ENCODE measurements at regions of chr6 and their contacts with region 1.

Region 1: DNA sequence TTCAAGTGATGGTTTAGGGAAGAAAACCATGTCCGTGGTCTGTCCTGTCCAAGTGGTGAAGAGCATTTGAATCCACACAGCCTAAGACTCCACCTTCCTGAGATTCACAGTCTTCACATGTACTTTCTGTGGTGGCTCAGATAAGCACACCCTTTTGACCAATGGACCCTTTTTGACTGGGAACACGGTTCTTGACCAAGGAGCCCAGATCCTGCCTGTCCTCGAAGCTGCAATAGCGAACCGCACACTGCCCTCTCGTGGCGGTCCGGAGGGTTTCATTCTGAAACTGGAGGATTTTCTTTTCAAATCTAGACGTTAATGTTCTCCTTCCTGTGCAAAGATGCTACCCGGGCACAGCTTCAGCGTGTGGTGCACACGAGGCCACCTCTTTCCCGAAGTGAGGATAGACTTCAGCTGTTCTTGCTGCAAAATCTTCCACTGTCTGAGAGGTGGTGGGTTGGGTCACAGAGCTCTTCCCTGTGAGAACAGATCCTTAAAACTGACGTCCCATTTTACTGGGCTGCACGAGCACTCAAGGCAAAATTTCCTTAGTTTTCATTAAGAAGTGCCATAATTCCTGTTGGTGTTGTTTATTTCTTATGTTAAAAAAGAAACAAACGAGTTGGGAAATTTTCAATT is 90.5 kb downstream of the SYNJ2 start:
- DNase-seq: peak; percentile 23 to 85
- H3K4me3 ChIP-seq: no peak overlapping the region
- H3K27ac ChIP-seq: no peak overlapping the region
- H3K4me1 ChIP-seq: peaks cover 0 to 1% (median 0%) of the 10 kb centered on the region in 4 experiments; a peak in 2 of 7 replicates
- H3K27me3 ChIP-seq: no peaks in the 10 kb centered on the region
- CTCF ChIP-seq: peak; percentile 81 to 90 (median 86)
- EP300 ChIP-seq: no peak
- POLR2A ChIP-seq: no peak
- RAD21 ChIP-seq: peak; percentile 94 to 97

Region 2: GRCh38 chr6:157946865-157947532 is 125.2 kb before region 1 on chr6:
- CTCF ChIA-PET with region 1: interaction called, 13 read pairs
- POLR2A ChIA-PET with region 1: no interaction called
- DNase-seq: no peak
- H3K4me3 ChIP-seq: no peak overlapping the region
- H3K27ac ChIP-seq: no peak overlapping the region
- H3K4me1 ChIP-seq: no peaks in the 10 kb centered on the region
- H3K27me3 ChIP-seq: no peaks in the 10 kb centered on the region
- CTCF ChIP-seq: peak in 2 of 3 experiments; percentile 65 to 82; a peak in 3 of 4 replicates
- EP300 ChIP-seq: no peak
- POLR2A ChIP-seq: peak in 1 of 2 experiments; percentile 20; a peak in 1 of 3 replicates
- RAD21 ChIP-seq: peak; percentile 91 to 93

Region 3: DNA sequence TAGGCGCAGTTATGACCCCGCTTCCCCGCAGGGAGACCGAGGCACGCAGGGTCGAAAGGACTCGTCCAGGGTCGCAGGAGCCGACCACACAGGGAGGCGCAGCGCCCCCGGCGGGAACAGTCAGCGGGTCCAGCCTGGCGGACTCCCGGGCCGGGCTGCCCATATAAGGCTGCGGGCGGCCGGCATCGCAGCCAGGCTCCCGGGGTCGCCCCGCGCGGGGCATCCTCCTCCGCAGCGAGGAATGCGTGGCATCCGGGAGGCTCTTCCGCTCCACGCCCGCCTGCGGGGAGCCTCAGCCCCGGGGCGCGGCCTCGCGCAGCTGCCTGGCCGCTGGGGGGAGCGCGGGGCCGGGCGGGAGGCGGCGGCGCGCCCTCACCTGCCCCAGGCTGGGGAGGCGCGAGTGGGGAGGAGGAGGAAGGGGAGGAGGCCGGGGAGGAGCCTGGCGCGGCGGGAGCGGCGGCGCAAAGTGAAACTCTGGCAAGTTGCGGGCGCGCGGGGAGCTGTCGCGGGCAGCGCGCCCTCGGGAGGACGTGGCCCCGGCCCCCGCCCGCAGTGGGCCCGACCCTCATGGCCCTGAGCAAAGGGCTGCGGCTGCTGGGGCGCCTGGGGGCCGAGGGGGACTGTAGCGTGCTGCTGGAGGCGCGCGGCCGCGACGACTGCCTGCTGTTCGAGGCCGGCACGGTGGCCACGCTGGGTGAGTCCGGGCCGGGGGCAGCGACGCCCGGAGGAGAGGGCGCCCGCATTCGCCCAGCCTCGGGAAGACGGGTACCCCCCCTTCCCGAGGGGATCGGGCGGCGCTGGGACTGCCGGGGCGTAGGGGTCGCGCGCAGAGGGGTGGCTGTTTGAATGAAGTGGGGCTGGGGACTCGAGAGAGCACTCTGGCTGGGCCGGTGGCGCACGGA is 90.6 kb before region 1 on chr6 and contains the start of gene SYNJ2:
- CTCF ChIA-PET with region 1: interaction called, 12 read pairs
- POLR2A ChIA-PET with region 1: interaction called, 5 read pairs
- DNase-seq: peak; percentile 57 to 82
- H3K4me3 ChIP-seq: peak within 1 kb of the TSS; percentile 50 to 81 (median 62)
- H3K27ac ChIP-seq: peak within 1 kb of the TSS; percentile 75; the same call in 1 of the 2 replicates
- H3K4me1 ChIP-seq: peaks cover 4 to 24% (median 20%) of the 10 kb centered on the region in 4 experiments
- H3K27me3 ChIP-seq: peaks cover 0 to 16% (median 11%) of the 10 kb centered on the region in 4 experiments; a peak in 5 of 7 replicates
- CTCF ChIP-seq: peak in 2 of 3 experiments; percentile 40 to 44; a peak in 3 of 4 replicates
- EP300 ChIP-seq: no peak
- POLR2A ChIP-seq: peak in 1 of 2 experiments; percentile 48; a peak in 1 of 3 replicates
- RAD21 ChIP-seq: peak; percentile 13 to 21; a peak in 2 of 4 replicates
- total RNA-seq, gene SYNJ2: 13.5 and 13.9 TPM in 2 replicates

Region 4: GRCh38 chr6:158026054-158026900 is 45.9 kb before region 1 on chr6:
- CTCF ChIA-PET with region 1: interaction called, 23 read pairs
- POLR2A ChIA-PET with region 1: no interaction called
- DNase-seq: peak in 1 of 2 experiments; percentile 80
- H3K4me3 ChIP-seq: no peak overlapping the region
- H3K27ac ChIP-seq: no peak overlapping the region
- H3K4me1 ChIP-seq: peaks cover 0 to 10% (median 4%) of the 10 kb centered on the region in 4 experiments; a peak in 3 of 7 replicates
- H3K27me3 ChIP-seq: no peaks in the 10 kb centered on the region
- CTCF ChIP-seq: peak in 2 of 3 experiments; percentile 52 to 75; a peak in 3 of 4 replicates
- EP300 ChIP-seq: no peak
- POLR2A ChIP-seq: no peak
- RAD21 ChIP-seq: peak; percentile 37 to 52; a peak in 3 of 4 replicates

Region 5: GRCh38 chr6:158047127-158047518 is 25.1 kb before region 1 on chr6:
- CTCF ChIA-PET with region 1: interaction called, 33 read pairs
- POLR2A ChIA-PET with region 1: no interaction called
- DNase-seq: no peak
- H3K4me3 ChIP-seq: no peak overlapping the region
- H3K27ac ChIP-seq: no peak overlapping the region
- H3K4me1 ChIP-seq: no peaks in the 10 kb centered on the region
- H3K27me3 ChIP-seq: no peaks in the 10 kb centered on the region
- CTCF ChIP-seq: no peak
- EP300 ChIP-seq: no peak
- POLR2A ChIP-seq: no peak
- RAD21 ChIP-seq: no peak

Region 6: DNA sequence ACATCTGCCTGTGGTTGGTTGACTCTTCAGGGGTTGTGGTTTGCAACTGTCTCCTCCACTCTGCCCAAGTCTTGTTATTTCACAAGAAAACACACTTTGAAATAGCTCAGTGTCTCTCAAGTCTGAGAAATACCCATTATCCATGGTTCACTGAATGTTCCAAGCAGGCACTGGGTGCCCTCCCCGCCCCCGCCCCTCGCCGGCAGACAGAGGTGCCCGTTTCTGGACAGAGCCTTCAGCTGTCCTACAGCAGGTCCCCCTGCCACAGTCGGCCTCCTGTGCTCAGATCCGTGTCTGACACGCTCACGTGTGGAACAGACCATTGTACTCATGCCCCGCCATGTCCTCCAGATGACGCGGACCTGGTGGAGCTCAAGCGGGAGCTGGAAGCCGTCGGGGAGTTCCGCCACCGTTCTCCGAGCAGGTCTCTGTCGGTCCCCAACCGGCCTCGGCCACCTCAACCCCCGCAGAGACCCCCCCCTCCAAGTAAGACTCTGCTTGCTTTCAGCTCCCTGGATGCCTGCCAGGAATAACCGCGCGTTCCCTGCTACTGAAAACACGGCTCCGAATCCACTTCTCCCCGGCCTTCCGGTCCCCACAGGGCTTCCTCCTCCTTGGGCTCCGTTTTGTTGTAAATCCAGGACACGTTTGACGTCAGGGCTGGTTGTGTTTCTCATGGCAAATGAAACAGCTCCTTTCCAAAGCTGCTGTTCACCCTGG is 14.5 kb after region 1 on chr6:
- CTCF ChIA-PET with region 1: interaction called, 22 read pairs
- POLR2A ChIA-PET with region 1: no interaction called
- DNase-seq: peak in 1 of 2 experiments; percentile 16
- H3K4me3 ChIP-seq: no peak overlapping the region
- H3K27ac ChIP-seq: no peak overlapping the region
- H3K4me1 ChIP-seq: no peaks in the 10 kb centered on the region
- H3K27me3 ChIP-seq: no peaks in the 10 kb centered on the region
- CTCF ChIP-seq: no peak
- EP300 ChIP-seq: no peak
- POLR2A ChIP-seq: no peak
- RAD21 ChIP-seq: no peak

Region 7: DNA sequence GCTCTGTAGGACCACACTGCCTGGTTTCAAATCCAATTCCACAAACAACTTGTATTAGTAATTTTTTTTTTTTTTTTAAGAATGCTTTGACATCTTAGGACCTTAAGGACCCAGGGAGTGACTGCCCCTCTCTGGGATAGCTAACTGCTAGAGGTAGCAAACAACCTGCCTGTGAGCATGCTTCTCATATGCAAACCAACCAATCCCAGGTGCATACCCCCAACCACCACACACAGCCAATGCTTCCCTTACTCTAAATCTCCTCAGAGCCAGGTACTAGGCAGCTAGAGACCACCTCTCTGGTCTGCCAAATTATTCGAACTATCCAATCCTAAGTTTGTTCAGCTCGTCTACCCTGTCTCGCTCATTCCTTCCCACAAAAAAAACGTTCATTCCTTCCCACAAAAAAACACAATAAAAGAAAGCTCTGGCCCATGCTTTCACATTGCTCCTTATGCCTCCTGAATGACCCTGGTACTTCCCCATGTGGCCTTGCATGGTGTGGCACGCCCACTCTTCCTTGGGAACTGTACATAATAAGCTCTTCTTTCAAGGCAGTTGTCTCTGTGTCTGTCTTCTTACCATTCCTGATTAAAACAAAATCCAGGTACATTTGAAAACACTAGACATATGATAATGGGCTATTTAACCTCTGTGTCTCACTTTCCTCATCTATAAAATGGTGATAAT is 89.5 kb after region 1 on chr6:
- CTCF ChIA-PET with region 1: no interaction called
- POLR2A ChIA-PET with region 1: no interaction called
- DNase-seq: no peak
- H3K4me3 ChIP-seq: peak overlapping the region in 1 of 4 experiments; percentile 19; a peak in 2 of 8 replicates
- H3K27ac ChIP-seq: no peak overlapping the region
- H3K4me1 ChIP-seq: peaks cover 0 to 10% (median 5%) of the 10 kb centered on the region in 4 experiments; a peak in 4 of 7 replicates
- H3K27me3 ChIP-seq: no peaks in the 10 kb centered on the region; a peak in 2 of 7 replicates
- CTCF ChIP-seq: peak in 1 of 3 experiments; percentile 3; a peak in 1 of 4 replicates
- EP300 ChIP-seq: no peak
- POLR2A ChIP-seq: no peak
- RAD21 ChIP-seq: no peak

Region 8: DNA sequence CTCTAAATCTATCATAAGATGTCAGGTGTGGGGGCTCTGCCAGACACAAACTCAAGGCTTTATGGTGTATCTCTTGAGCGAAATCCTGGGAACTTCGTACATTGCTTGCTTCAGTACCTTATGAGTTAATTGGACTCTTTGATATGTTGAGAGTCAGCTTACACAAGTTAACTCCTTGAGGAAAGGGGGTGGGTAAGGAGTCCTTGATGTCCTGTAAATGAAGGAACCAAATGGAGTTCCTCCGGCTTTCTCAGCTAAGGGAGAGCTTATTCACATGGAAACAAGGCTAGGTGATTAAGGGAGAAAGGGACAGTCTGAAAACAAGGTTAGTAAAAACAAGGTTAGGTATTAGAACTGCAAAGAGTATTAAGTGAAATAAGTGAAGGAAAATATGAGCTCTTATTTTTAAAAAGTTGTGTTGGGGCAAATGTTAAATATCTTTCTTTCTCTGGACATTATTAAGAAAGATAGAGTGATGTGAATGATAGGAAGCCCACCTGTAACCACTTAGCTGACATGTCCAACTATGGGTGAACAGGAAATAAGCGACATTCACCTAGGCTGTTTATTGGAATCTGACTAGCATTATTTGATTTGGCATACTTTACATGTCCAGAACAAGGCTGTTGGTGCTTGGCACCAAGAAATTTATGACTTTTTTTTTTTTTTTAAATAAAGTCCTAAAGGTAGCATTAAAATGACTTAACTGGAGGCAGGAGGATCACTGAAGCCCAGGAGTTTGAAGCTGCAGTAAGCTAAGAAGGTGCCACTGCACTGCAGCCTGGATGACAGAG is 122.5 kb after region 1 on chr6:
- CTCF ChIA-PET with region 1: no interaction called
- POLR2A ChIA-PET with region 1: no interaction called
- DNase-seq: no peak
- H3K4me3 ChIP-seq: peak overlapping the region; percentile 12 to 47 (median 25); a peak in 6 of 8 replicates
- H3K27ac ChIP-seq: no peak overlapping the region
- H3K4me1 ChIP-seq: peaks cover 0 to 10% (median 3%) of the 10 kb centered on the region in 4 experiments; a peak in 3 of 7 replicates
- H3K27me3 ChIP-seq: no peaks in the 10 kb centered on the region
- CTCF ChIP-seq: no peak
- EP300 ChIP-seq: no peak
- POLR2A ChIP-seq: no peak
- RAD21 ChIP-seq: no peak

Measured in H1 (cell line).